ENCODE measurements at regions of chr12 and their contacts with region 1.

Region 1: GRCh38 chr12:40152783-40153383 is 47.0 kb upstream of the SLC2A13 start:
- DNase-seq: peak in 5 of 6 donors; percentile 18 to 70 (median 41)
- ATAC-seq: peak; percentile 71 to 90 (median 78)
- H3K4me3 ChIP-seq: no peak overlapping the region
- H3K27ac ChIP-seq: no peak overlapping the region
- H3K4me1 ChIP-seq: no peaks in the 10 kb centered on the region
- H3K27me3 ChIP-seq: no peaks in the 10 kb centered on the region
- CTCF ChIP-seq: peak; percentile 53 to 78 (median 66)

Region 2: GRCh38 chr12:40300490-40300889 is 147.6 kb after region 1 on chr12:
- intact Hi-C with region 1: loop called in 1 of 3 experiments (anchors 10 kb)
- DNase-seq: no peak
- ATAC-seq: no peak
- H3K4me3 ChIP-seq: no peak overlapping the region
- H3K27ac ChIP-seq: no peak overlapping the region
- H3K4me1 ChIP-seq: no peaks in the 10 kb centered on the region
- H3K27me3 ChIP-seq: no peaks in the 10 kb centered on the region
- CTCF ChIP-seq: no peak